ENCODE measurements at regions of chr7 and their contacts with region 1.

Region 1: GRCh38 chr7:88243345-88243909 is 23.6 kb upstream of the SRI start:
- DNase-seq: no peak
- ATAC-seq: peak; percentile 23
- H3K4me3 Mint-ChIP-seq: no peak overlapping the region
- H3K27ac Mint-ChIP-seq: no peak overlapping the region
- H3K4me1 Mint-ChIP-seq: no peaks in the 10 kb centered on the region
- H3K27me3 Mint-ChIP-seq: peaks cover 2% of the 10 kb centered on the region

Region 2: DNA sequence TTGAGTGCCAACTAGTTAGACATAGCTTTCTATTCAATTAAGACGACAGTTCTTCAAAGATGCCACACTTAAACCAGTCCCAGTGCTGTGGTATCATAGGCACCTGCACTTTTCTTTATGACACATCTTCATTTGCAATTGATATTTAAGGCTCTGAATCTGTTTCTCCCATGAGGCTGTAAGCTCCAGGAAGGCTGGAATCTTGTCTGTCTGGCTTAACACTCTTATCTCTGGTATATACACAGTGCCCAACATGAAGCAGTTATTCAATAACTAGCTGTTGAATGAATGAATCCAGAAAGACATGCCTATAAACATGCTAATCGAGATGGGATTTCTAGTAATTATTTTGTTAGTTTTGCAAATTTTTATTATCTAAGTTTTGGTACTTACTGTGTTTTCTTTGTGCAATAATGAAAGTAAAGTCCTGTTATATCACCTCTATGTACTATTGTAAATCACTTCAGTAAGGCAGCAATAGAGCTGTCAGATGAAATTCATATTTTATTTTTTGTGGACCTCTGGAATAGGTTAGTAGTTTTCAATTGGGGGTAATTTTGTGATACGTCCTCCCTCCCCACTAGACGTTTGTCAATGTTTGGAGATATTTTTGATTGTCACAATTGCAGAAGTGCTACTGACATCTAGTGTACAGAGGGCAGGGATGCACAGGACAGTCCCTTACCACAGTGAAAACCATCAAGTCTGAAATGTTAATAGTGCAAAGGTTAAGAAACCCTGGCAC is 114.5 kb after region 1 on chr7:
- CTCF ChIA-PET with region 1: no interaction called
- POLR2A ChIA-PET with region 1: no interaction called
- intact Hi-C with region 1: loop called (anchors 2 to 5 kb)
- DNase-seq: no peak
- ATAC-seq: no peak
- H3K4me3 Mint-ChIP-seq: no peak overlapping the region
- H3K27ac Mint-ChIP-seq: no peak overlapping the region
- H3K4me1 Mint-ChIP-seq: peaks cover 3% of the 10 kb centered on the region
- H3K27me3 Mint-ChIP-seq: peaks cover 15% of the 10 kb centered on the region

Region 3: DNA sequence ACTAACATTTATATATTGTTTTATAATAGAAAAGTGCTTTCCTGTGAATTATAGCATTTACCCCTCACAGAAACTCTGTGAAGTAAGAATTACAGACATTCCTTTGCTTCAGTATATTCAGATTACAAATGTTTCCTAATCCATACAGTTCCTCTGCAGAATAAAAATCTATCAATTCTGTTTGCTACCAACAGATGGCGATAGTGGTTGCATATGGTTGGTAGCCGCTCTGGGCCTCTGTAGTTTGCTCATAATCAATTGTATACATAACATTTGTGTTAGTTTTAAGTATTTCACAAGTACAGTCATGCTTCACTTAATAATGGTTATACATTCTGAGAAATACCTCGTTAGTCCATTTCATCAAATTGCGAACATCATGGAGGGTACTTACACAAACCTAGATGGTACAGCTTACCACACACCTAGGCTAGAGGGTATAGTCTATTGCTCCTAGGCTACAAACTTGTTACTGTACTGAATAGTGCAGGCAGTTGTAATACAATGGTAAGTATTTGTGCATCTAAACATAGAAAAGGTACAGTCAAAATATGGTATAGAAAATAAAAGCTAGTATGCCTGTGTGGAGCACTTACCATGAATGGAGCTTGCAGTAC is 157.7 kb after region 1 on chr7:
- CTCF ChIA-PET with region 1: no interaction called
- POLR2A ChIA-PET with region 1: no interaction called
- intact Hi-C with region 1: loop called in 1 of 2 experiments (anchors 1 kb)
- DNase-seq: peak; percentile 8
- ATAC-seq: peak; percentile 53
- H3K4me3 Mint-ChIP-seq: no peak overlapping the region
- H3K27ac Mint-ChIP-seq: no peak overlapping the region
- H3K4me1 Mint-ChIP-seq: peaks cover 9% of the 10 kb centered on the region
- H3K27me3 Mint-ChIP-seq: no peaks in the 10 kb centered on the region

Region 4: DNA sequence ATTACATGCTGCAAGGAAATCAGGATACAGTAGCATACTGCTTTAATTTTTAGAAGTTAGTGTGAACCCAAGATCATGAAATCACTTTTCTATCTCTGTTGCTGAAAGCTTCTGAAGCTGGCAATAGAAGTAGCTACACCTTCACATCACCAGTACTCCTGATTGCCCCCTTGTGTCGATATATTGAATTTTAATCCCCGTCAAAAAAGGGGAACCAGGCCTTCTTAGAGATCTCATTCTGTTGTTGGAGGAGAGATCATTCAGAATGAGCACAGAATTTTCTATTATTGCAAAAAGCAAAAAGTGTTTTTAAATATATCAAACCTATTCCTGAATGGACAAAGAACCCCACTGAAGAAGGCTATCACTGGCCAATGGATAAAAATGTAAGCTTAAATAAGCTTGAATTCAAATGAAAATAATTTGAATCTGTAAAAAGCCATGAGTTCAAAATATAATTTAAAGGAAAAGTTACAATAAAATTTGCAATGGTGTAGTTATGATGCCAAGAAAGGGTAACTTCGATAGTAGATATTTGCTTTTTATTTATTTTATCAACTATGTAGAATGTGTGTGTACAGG is 591.8 kb after region 1 on chr7:
- CTCF ChIA-PET with region 1: interaction called, 6 read pairs
- POLR2A ChIA-PET with region 1: no interaction called
- intact Hi-C with region 1: loop called (anchors 1 to 5 kb)
- DNase-seq: no peak
- ATAC-seq: no peak
- H3K4me3 Mint-ChIP-seq: no peak overlapping the region
- H3K27ac Mint-ChIP-seq: no peak overlapping the region
- H3K4me1 Mint-ChIP-seq: no peaks in the 10 kb centered on the region
- H3K27me3 Mint-ChIP-seq: no peaks in the 10 kb centered on the region

Region 5: DNA sequence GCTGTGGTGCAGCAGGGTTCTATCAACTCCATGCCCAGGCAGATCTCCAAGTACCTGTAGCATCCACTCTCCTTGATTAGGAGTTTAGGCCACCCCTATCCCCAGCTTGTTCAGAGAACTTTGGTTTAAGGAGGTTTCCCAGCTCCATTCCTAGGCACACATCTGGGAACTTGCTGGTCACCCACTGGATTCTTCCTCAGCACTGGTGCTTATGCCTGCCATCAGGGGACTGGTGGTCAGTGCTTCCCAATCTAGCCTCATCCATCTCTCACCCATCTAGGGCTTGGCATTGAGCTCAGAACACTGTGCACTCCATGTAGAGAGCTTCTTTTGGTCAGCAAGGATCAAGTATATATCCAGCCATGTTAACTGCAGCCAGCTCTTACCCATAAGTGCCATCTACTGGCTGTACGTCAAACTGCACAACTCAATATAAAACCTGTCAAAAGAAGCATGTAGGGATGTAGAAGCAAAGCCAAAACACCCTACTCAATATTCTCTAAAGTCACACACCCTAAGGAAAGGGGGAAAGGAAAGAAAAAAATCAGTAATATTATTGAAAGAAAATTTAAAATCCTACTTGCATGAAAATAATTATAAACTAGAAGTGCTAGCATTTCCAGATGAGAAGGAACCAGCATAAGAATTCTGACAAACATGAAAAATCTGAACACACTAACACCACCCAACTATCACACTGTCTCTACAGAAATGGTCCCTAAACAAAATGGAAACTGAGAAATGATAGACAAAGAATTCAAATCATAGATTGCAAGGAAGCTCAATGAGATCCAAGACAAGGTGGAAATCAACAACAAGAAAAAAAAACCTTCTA is 1379.6 kb after region 1 on chr7:
- CTCF ChIA-PET with region 1: no interaction called
- POLR2A ChIA-PET with region 1: no interaction called
- intact Hi-C with region 1: loop called in 1 of 2 experiments (anchors 5 kb)
- DNase-seq: peak; percentile 39
- ATAC-seq: peak; percentile 87
- H3K4me3 Mint-ChIP-seq: no peak overlapping the region
- H3K27ac Mint-ChIP-seq: no peak overlapping the region
- H3K4me1 Mint-ChIP-seq: peaks cover 26% of the 10 kb centered on the region
- H3K27me3 Mint-ChIP-seq: no peaks in the 10 kb centered on the region

Region 6: DNA sequence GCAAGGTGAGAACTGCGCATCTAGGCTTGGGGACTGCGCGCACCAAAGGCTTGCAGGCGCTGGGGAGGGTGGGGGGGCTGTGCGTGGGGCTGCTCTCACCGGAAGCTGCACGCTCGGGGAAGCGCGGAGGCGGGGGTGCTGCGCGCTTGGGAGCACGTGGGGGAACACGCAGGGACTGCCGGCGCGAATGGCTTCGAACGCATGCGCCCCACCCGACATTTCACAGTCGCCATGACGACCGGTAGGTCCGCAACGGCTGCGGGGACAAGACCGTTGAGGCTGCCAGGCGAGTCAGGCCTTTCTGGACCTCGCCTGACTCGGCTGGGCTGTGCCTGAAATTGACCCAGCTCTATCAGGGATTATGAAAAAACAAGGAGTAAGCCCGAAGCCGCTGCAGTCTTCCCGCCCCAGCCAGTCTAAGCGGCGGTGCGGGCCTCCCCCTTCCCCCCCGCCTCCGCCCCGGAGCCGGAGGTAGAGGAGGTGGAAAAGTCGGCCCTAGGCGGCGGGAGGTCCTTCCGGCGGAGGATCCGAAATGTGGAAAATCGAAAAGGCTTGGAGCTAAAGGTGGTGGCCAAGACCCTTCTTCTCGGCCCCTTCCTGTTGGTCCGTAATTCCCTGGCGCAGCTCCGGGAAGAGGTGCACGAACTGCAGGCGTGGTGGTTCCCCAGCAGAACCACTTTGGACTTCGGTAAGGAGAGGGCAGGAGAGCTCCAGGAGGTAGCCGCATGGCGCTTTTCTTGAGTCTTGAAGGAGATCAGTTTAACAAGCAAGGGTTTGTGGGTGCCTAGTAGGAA is 1875.9 kb after region 1 on chr7:
- CTCF ChIA-PET with region 1: no interaction called
- POLR2A ChIA-PET with region 1: no interaction called
- intact Hi-C with region 1: loop called in 1 of 2 experiments (anchors 10 kb)
- DNase-seq: peak; percentile 36
- ATAC-seq: peak; percentile 36
- H3K4me3 Mint-ChIP-seq: peak overlapping the region; percentile 54
- H3K27ac Mint-ChIP-seq: no peak overlapping the region
- H3K4me1 Mint-ChIP-seq: peaks cover 11% of the 10 kb centered on the region
- H3K27me3 Mint-ChIP-seq: peaks cover 21% of the 10 kb centered on the region